ENCODE measurements at regions of chr17 and their contacts with region 1.

Region 1: GRCh38 chr17:44006598-44007345 is 2.4 kb downstream of the NAGS start:
- DNase-seq: peak; percentile 93
- H3K4me3 ChIP-seq: peak overlapping the region in 2 of 3 experiments; percentile 43 to 56
- H3K27ac ChIP-seq: no peak overlapping the region
- H3K4me1 ChIP-seq: peaks cover 36% of the 10 kb centered on the region
- H3K27me3 ChIP-seq: no peaks in the 10 kb centered on the region
- CTCF ChIP-seq: peak; percentile 57 to 76
- POLR2A ChIP-seq: no peak

Region 2: GRCh38 chr17:43917348-43918018 is 89.3 kb before region 1 on chr17:
- CTCF ChIA-PET with region 1: no interaction called
- POLR2A ChIA-PET with region 1: no interaction called
- dilution Hi-C with region 1: no loop called
- intact Hi-C with region 1: no loop called
- DNase-seq: peak; percentile 32
- H3K4me3 ChIP-seq: no peak overlapping the region
- H3K27ac ChIP-seq: no peak overlapping the region
- H3K4me1 ChIP-seq: no peaks in the 10 kb centered on the region
- H3K27me3 ChIP-seq: peaks cover 15 to 23% of the 10 kb centered on the region in 2 experiments
- CTCF ChIP-seq: peak; percentile 41 to 81
- POLR2A ChIP-seq: no peak

Region 3: GRCh38 chr17:44241106-44241624 is 234.4 kb after region 1 on chr17:
- CTCF ChIA-PET with region 1: no interaction called
- POLR2A ChIA-PET with region 1: interaction called, 16 read pairs
- dilution Hi-C with region 1: no loop called
- intact Hi-C with region 1: no loop called
- DNase-seq: no peak
- H3K4me3 ChIP-seq: no peak overlapping the region
- H3K27ac ChIP-seq: no peak overlapping the region
- H3K4me1 ChIP-seq: peaks cover 3% of the 10 kb centered on the region
- H3K27me3 ChIP-seq: peaks cover 0 to 2% of the 10 kb centered on the region in 2 experiments
- CTCF ChIP-seq: no peak
- POLR2A ChIP-seq: no peak